Dendritic cell treated with granulocyte-macrophage colony-stimulating factor and Interleukin-4, amounts not matched to agents 40 ng/mL and 50 ng/mL, for 4 days (primary cell): ENCODE measurements at regions of chr18 and their contacts with region 1.

Region 1: GRCh38 chr18:45850021-45850420 is 24.5 kb downstream of the SIGLEC15 start:
- H3K4me3 Mint-ChIP-seq: no peak overlapping the region
- H3K27ac Mint-ChIP-seq: no peak overlapping the region
- H3K4me1 Mint-ChIP-seq: no peaks in the 10 kb centered on the region
- H3K27me3 Mint-ChIP-seq: no peaks in the 10 kb centered on the region

Region 2: GRCh38 chr18:45900623-45901022 is 50.6 kb after region 1 on chr18:
- intact Hi-C with region 1: loop called (anchors 10 kb)
- H3K4me3 Mint-ChIP-seq: no peak overlapping the region
- H3K27ac Mint-ChIP-seq: no peak overlapping the region
- H3K4me1 Mint-ChIP-seq: no peaks in the 10 kb centered on the region
- H3K27me3 Mint-ChIP-seq: no peaks in the 10 kb centered on the region